ENCODE measurements at regions of chr18 and their contacts with region 1.

Region 1: GRCh38 chr18:6249170-6249569 is 165.5 kb downstream of the L3MBTL4 start:
- ATAC-seq: no peak
- H3K4me3 ChIP-seq: no peak overlapping the region
- H3K27ac ChIP-seq: no peak overlapping the region
- H3K4me1 ChIP-seq: no peaks in the 10 kb centered on the region

Region 2: GRCh38 chr18:5868218-5869115 is 380.7 kb before region 1 on chr18:
- in situ Hi-C with region 1: no loop called
- ATAC-seq: peak; percentile 56 to 99 (median 78)
- H3K4me3 ChIP-seq: no peak overlapping the region
- H3K27ac ChIP-seq: no peak overlapping the region
- H3K4me1 ChIP-seq: no peaks in the 10 kb centered on the region

Region 3: DNA sequence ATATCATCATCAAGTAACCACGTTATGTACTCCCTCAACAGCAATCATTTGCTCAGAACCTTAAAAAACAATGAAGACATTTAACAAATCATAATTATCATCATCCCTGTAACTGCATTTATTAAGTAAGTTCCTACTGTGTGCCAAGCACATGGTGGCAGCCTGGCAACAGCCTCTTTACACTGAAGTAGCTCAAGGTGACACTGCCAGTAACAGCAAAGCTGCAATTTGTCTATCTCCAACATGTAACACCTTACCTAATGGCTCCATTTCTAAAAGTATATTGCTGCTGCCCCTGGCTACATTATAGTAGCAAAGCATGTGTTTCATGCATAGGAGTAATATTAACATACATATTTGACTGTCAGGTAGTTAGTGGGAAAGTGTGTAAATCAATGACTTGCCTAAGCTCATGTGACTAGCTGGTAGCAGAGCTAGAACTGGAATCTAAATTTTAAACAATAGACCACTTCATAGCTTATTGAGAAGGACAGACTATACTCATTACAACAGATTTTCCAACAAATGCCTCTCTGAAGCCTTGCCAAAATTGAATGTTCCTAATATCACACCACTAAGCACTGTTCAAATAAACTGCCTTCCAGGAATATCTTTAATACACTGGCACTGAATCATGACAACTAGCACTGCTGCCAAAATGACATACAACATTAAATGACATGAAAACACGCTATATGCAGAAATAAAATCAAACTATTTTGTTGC is 78.9 kb after region 1 on chr18:
- in situ Hi-C with region 1: loop called in 1 of 9 experiments (anchors 25 kb)
- ATAC-seq: peak in 1 of 8 experiments; percentile 82
- H3K4me3 ChIP-seq: no peak overlapping the region
- H3K27ac ChIP-seq: no peak overlapping the region
- H3K4me1 ChIP-seq: no peaks in the 10 kb centered on the region